ENCODE measurements at regions of chr12 and their contacts with region 1.

Region 1: GRCh38 chr12:76031537-76032073 is at the start of gene PHLDA1:
- DNase-seq: peak; percentile 80 to 95 (median 92)
- H3K4me3 ChIP-seq: peak within 1 kb of the TSS; percentile 57 to 94 (median 82)
- H3K27ac ChIP-seq: peak within 1 kb of the TSS; percentile 35 to 99 (median 93)
- H3K27me3 ChIP-seq: no peaks in the 10 kb centered on the region
- CTCF ChIP-seq: peak in 54 of 56 donors; percentile 19 to 76 (median 56)
- total RNA-seq, gene PHLDA1: 9.0 to 26.9 (median 17.8) TPM

Region 2: GRCh38 chr12:75390899-75391538 is 640.6 kb before region 1 on chr12 and contains the start of gene GLIPR1L2:
- intact Hi-C with region 1: loop called (anchors 5 to 10 kb)
- DNase-seq: peak; percentile 92 to 97 (median 95)
- H3K4me3 ChIP-seq: peak within 1 kb of the TSS; percentile 51 to 86 (median 75)
- H3K27ac ChIP-seq: peak within 1 kb of the TSS; percentile 70 to 98 (median 92)
- H3K27me3 ChIP-seq: no peaks in the 10 kb centered on the region
- CTCF ChIP-seq: peak; percentile 67 to 95 (median 84)
- total RNA-seq, gene GLIPR1L2: 0.80 to 10.4 (median 3.9) TPM

Region 3: DNA sequence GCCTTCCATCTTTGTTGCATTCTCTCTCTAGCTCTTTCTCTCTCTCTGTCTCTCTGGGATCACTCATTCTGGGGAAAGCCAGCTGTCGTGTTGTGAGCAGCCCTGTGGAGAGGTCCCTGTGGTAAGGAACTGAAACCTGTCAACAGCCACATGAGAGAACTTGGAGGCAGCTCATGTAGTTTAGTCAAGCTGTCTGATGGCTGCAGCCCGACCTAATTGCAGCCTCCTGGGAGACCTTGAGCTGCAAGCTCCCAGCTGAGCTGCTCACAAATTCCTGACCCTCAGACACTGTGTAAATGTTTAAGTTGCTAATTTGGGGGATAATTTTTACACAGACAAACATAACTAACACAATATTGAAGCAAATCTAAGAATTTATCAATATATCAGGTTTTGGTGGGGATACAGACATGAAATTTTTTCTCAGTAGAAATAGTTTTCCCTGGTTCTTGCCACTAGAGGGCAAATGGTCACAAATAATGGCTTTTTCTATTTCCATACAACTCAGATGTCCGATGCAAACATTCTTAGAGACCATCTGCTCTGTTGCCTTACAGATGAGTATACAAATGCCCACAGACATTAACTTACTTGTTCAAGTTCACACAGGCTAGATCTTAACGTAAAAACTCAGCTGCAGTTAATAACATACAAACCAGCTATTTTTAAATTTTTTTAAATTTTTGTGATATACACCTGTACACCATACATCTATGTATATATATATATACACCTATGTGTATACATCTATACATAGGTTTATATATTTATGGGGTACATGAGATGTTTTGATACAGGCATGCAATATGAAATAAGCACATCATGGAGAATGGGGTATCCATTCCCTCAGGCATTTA is 504.7 kb before region 1 on chr12:
- intact Hi-C with region 1: loop called in 1 of 2 experiments (anchors 5 kb)
- DNase-seq: peak in 1 of 10 donors; percentile 4
- H3K4me3 ChIP-seq: no peak overlapping the region
- H3K27ac ChIP-seq: no peak overlapping the region
- H3K27me3 ChIP-seq: no peaks in the 10 kb centered on the region
- CTCF ChIP-seq: peak; percentile 57 to 90 (median 77)

Region 4: GRCh38 chr12:75850721-75851462 is 180.7 kb before region 1 on chr12:
- intact Hi-C with region 1: loop called in 1 of 2 experiments (anchors 5 kb)
- DNase-seq: no peak
- H3K4me3 ChIP-seq: no peak overlapping the region
- H3K27ac ChIP-seq: no peak overlapping the region
- H3K27me3 ChIP-seq: peaks cover 0 to 42% (median 0%) of the 10 kb centered on the region in 45 donors
- CTCF ChIP-seq: no peak

Region 5: DNA sequence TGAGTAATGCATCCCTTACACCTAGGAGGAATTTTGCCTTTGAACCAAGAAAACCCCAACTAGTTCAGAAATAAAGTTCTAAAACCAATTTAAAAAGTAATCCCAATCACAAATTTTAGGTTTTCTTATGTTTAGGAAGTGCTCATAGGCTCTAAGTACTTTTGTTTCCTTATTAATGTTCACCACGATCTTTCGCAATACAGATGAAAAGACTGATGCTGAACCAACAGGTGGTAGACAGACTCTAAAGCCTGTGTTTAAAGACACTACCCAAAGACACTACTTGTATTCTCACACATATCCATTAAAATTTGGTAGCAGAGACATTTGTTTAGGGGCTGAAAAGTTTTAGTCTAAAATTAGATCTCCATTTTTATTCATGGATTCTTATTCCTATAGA is 10.5 kb after region 1 on chr12:
- intact Hi-C with region 1: no loop called
- DNase-seq: no peak
- H3K4me3 ChIP-seq: no peak overlapping the region
- H3K27ac ChIP-seq: no peak overlapping the region
- H3K27me3 ChIP-seq: no peaks in the 10 kb centered on the region
- CTCF ChIP-seq: no peak

Region 6: GRCh38 chr12:76559400-76560085 is 527.9 kb after region 1 on chr12 and contains the start of gene OSBPL8:
- intact Hi-C with region 1: loop called in 1 of 2 experiments (anchors 5 kb)
- DNase-seq: peak; percentile 92 to 98 (median 96)
- H3K4me3 ChIP-seq: peak within 1 kb of the TSS; percentile 68 to 99 (median 92)
- H3K27ac ChIP-seq: peak within 1 kb of the TSS; percentile 78 to 99 (median 95)
- H3K27me3 ChIP-seq: no peaks in the 10 kb centered on the region
- CTCF ChIP-seq: peak in 50 of 56 donors; percentile 8 to 67 (median 50)
- total RNA-seq, gene OSBPL8: 57.8 to 129 (median 93.5) TPM